Activated T-helper 2 cell treated with anti-CD3 and anti-CD28 coated beads, Interferon-gamma antibody, Interleukin-2, Interleukin-4, amounts not matched to agents 10 μg/mL and 5 μg/mL and 100 μg/mL, durations not matched to agents 14 hours and 24 hours and 36 hours (primary cell): ENCODE measurements at regions of chr13 and their contacts with region 1.

Region 1: DNA sequence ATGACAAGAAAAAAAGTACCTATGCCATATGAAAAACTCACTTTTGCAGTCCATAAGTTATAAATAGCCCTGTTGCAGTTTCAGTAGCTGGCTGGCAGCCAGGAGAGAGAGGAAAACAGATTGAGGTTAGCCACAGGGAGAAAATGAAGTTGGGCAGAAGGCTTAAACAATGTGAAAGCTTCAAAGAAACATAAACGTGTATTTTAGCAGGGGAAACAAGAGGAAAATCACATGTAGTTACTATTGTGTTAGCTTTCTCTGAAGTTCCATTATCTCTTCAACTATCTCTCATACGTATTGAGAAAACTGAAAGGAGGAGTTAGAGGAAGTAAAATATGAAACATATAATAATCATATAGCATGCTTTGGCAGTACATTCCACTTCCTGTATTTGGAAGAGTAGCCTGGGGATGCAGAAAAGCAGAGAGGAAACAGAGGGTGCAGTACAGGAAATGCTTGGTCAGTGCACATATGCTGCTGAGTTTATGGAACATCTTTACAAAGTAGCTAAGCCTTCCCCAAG is 1551.1 kb downstream of the EFNB2 start:
- DNase-seq: no peak
- H3K4me3 Mint-ChIP-seq: no peak overlapping the region
- H3K27ac Mint-ChIP-seq: peak overlapping the region; percentile 24
- H3K4me1 Mint-ChIP-seq: peaks cover 8% of the 10 kb centered on the region
- H3K27me3 Mint-ChIP-seq: no peaks in the 10 kb centered on the region

Region 2: GRCh38 chr13:105139380-105140285 is 155.3 kb after region 1 on chr13:
- intact Hi-C with region 1: loop called (anchors 2 kb)
- DNase-seq: peak; percentile 64
- H3K4me3 Mint-ChIP-seq: peak overlapping the region; percentile 83
- H3K27ac Mint-ChIP-seq: peak overlapping the region; percentile 92
- H3K4me1 Mint-ChIP-seq: peaks cover 23% of the 10 kb centered on the region
- H3K27me3 Mint-ChIP-seq: no peaks in the 10 kb centered on the region

Region 3: GRCh38 chr13:105908586-105908985 is 924.2 kb after region 1 on chr13:
- intact Hi-C with region 1: no loop called
- DNase-seq: no peak
- H3K4me3 Mint-ChIP-seq: no peak overlapping the region
- H3K27ac Mint-ChIP-seq: no peak overlapping the region
- H3K4me1 Mint-ChIP-seq: peaks cover 7% of the 10 kb centered on the region
- H3K27me3 Mint-ChIP-seq: peaks cover 6% of the 10 kb centered on the region